Vagina (tissue), 2 donors: ENCODE measurements at regions of chr7 and their contacts with region 1.

Region 1: DNA sequence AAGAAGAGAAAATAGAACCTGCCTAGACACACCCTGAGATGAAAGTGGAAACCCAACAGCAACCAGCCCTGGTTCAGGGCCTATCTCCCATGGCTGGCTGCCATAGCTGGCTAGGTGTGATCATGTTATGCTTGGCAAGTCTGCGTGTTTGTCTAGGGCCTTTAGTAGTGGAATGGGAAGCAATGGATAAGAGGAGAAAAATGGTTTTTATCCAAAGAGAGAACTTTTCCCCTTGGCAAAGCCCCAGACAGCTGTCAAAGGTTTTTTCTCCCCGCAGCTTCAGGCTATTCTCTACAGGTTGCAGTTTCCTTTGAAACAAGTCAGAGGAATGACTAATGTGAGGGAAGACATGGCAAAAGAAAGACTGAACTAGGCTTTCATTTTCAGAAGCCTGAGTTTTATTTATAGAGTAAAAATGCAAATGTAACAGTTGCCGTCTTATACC is 161.5 kb downstream of the SEMA3D start:
- DNase-seq: no peak
- H3K4me3 ChIP-seq: no peak overlapping the region
- H3K27ac ChIP-seq: no peak overlapping the region
- H3K4me1 ChIP-seq: no peaks in the 10 kb centered on the region
- H3K27me3 ChIP-seq: no peaks in the 10 kb centered on the region
- CTCF ChIP-seq: no peak
- POLR2A ChIP-seq: no peak

Region 2: DNA sequence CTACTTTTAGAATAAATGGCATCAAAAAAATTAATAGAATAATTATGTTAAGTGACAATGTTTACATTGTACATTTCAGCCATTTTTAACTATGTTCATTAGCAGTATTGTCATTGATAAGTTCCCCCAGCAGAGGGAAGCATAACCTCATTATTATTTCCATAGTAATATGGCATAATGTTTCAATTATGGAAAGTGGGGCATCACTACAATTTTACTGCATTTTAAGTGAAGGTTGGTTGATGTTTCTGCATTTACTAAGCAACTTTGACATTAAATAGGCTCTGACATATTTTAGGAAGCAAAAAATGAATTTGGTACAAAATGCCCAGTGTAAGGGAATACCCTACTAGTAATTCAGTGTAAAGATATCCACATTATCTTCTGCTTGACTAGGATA is 1049.0 kb before region 1 on chr7:
- intact Hi-C with region 1: loop called (anchors 5 kb)
- DNase-seq: no peak
- H3K4me3 ChIP-seq: no peak overlapping the region
- H3K27ac ChIP-seq: no peak overlapping the region
- H3K4me1 ChIP-seq: no peaks in the 10 kb centered on the region
- H3K27me3 ChIP-seq: no peaks in the 10 kb centered on the region
- CTCF ChIP-seq: peak; percentile 19 to 46 (median 44)
- POLR2A ChIP-seq: no peak